Gastrocnemius medialis (tissue), 4 donors: ENCODE measurements at regions of chr2 and their contacts with region 1.

Region 1: DNA sequence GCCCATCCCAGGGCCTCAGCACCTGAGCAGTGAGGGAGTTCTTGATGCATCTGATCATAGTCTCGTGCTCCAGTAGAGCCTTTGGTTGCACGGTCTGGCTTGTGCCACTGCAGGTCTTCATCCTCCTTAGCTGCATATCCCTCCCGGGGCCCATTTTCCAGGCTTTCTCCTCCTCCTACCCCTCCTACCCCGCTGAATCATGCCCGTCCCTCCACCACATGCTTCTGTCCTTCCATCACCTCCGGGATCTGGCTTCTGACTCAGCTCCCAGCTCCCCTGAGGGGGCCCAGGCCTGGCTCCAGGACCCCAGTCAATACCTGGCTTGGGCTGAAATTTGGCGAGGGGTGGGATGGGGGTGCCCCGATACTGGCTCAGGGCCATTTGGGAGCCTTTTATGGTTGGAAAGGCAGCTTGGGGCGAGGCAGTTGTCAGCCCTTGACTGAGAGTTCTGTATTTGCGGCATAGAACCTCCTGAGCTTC is 18.2 kb downstream of the SPEG start:
- DNase-seq: peak in 1 of 2 donors; percentile 80
- ATAC-seq: peak; percentile 5 to 38
- H3K4me3 ChIP-seq: peak overlapping the region in 2 of 4 donors; percentile 14 to 15
- H3K27ac ChIP-seq: peak overlapping the region; percentile 95 to 99 (median 97)
- H3K4me1 ChIP-seq: peaks cover 59 to 62% of the 10 kb centered on the region in 2 donors
- H3K27me3 ChIP-seq: no peaks in the 10 kb centered on the region
- CTCF ChIP-seq: no peak
- POLR2A ChIP-seq: no peak

Region 2: GRCh38 chr2:219155054-219155644 is 297.7 kb before region 1 on chr2:
- in situ Hi-C with region 1: no loop called
- intact Hi-C with region 1: no loop called
- DNase-seq: no peak
- ATAC-seq: peak; percentile 41 to 66
- H3K4me3 ChIP-seq: no peak overlapping the region
- H3K27ac ChIP-seq: no peak overlapping the region
- H3K4me1 ChIP-seq: peaks cover 5 to 6% of the 10 kb centered on the region in 2 donors
- H3K27me3 ChIP-seq: no peaks in the 10 kb centered on the region
- CTCF ChIP-seq: peak; percentile 34 to 69 (median 60)
- POLR2A ChIP-seq: no peak

Region 3: DNA sequence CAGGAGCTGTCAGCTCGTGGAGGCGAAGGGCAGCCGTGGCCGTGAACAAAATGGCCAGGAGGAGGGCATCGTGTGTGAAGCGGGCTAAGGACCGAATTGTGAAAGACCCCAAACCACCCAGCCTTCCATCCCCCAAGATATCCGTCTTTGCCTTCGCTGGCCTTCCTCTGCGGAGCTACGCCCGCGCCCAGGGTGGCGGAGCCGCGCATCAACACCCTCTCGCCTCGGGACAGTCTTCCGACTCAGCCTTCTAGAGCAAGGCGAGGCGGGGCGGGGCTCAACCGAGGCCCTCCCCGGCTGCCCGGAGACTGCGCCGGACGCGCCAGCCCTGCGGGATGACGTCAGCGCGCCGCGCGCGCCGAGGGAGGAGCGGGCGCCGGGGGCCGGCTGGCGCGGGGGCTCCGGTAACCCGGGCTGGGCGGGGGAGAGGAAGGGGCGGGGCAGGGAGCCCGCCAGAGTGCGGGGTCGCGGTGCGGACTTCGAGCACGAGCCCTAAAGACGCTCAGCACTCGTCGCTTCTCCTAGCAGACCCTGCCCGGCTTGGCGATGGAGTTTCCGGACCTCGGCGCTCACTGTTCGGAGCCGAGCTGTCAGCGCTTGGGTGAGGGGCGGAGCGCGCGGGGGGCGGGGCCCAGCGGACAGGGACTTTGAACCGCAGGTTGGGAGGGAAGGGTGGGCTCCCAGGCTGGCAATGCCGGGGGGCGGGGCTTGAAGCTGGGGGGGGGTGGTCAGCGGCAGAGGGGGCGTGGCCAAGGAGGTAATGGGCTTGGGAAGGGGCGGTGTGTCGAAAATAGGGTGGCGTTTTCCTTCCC is 246.2 kb before region 1 on chr2 and contains the start of gene ZFAND2B:
- in situ Hi-C with region 1: no loop called
- intact Hi-C with region 1: no loop called
- DNase-seq: peak; percentile 90 to 92
- ATAC-seq: peak; percentile 93 to 95
- H3K4me3 ChIP-seq: peak within 1 kb of the TSS; percentile 71 to 94 (median 84)
- H3K27ac ChIP-seq: peak within 1 kb of the TSS; percentile 87 to 99 (median 98)
- H3K4me1 ChIP-seq: peaks cover 16 to 21% of the 10 kb centered on the region in 2 donors
- H3K27me3 ChIP-seq: no peaks in the 10 kb centered on the region
- CTCF ChIP-seq: peak in 4 of 5 experiments; percentile 14 to 43 (median 18)
- POLR2A ChIP-seq: peak; percentile 89 to 93
- total RNA-seq, gene ZFAND2B: 33.2 to 60.8 (median 41.2) TPM

Region 4: DNA sequence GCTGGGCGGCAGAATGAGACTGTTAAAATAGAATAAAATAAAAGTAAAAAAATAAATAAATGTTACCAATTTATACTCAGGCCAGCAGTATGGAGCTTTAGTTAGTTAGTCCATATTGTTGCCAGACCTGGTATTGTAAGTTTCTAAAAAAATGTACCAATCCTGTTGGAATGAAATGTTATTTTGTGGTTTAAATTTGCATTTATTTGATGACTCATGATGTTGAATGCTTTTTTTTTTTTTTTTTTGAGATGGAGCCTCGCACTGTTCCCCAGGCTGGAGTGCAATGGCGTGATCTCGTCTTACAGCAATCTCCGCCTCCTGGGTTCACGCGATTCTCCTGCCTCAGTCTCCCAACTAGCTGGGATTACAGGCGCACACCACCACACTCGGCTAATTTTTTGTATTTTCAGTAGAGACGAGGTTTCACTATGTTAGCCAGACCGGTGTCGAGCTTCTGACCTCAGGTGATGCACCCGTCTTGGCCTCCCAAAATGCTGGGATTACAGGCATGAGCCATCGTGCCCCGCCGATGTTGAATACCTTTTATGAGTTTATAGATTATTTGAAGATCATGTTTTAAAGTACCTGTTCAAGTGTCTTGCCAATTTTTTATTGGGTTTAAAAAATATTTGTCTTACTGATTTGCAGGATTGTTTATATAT is 137.9 kb before region 1 on chr2:
- in situ Hi-C with region 1: no loop called
- intact Hi-C with region 1: no loop called
- DNase-seq: no peak
- ATAC-seq: no peak
- H3K4me3 ChIP-seq: no peak overlapping the region
- H3K27ac ChIP-seq: no peak overlapping the region
- H3K4me1 ChIP-seq: no peaks in the 10 kb centered on the region
- H3K27me3 ChIP-seq: peaks cover 7 to 22% (median 9%) of the 10 kb centered on the region in 3 donors
- CTCF ChIP-seq: no peak
- POLR2A ChIP-seq: no peak

Region 5: DNA sequence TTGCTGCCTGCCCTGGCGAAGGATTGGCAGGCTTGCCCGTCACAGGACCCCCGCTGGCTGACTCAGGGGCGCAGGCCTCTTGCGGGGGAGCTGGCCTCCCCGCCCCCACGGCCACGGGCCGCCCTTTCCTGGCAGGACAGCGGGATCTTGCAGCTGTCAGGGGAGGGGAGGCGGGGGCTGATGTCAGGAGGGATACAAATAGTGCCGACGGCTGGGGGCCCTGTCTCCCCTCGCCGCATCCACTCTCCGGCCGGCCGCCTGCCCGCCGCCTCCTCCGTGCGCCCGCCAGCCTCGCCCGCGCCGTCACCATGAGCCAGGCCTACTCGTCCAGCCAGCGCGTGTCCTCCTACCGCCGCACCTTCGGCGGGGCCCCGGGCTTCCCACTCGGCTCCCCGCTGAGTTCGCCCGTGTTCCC is 34.7 kb before region 1 on chr2 and contains the start of gene DES:
- in situ Hi-C with region 1: no loop called
- intact Hi-C with region 1: loop called (anchors 1 kb)
- DNase-seq: peak; percentile 87 to 94
- ATAC-seq: peak; percentile 47 to 55
- H3K4me3 ChIP-seq: peak within 1 kb of the TSS; percentile 75 to 95 (median 83)
- H3K27ac ChIP-seq: peak within 1 kb of the TSS; percentile 95 to 100 (median 98)
- H3K4me1 ChIP-seq: peaks cover 52 to 62% of the 10 kb centered on the region in 2 donors
- H3K27me3 ChIP-seq: no peaks in the 10 kb centered on the region
- CTCF ChIP-seq: no peak
- POLR2A ChIP-seq: peak; percentile 94 to 98
- total RNA-seq, gene DES: 19,008 to 28,635 (median 23,575) TPM

Region 6: GRCh38 chr2:219439506-219440093 is 13.3 kb before region 1 on chr2:
- in situ Hi-C with region 1: no loop called
- intact Hi-C with region 1: loop called (anchors 2 kb)
- DNase-seq: peak in 1 of 2 donors; percentile 59
- ATAC-seq: peak in 1 of 2 donors; percentile 2
- H3K4me3 ChIP-seq: no peak overlapping the region
- H3K27ac ChIP-seq: peak overlapping the region; percentile 95 to 100 (median 98)
- H3K4me1 ChIP-seq: peaks cover 59 to 72% of the 10 kb centered on the region in 2 donors
- H3K27me3 ChIP-seq: no peaks in the 10 kb centered on the region
- CTCF ChIP-seq: no peak
- POLR2A ChIP-seq: no peak

Region 7: DNA sequence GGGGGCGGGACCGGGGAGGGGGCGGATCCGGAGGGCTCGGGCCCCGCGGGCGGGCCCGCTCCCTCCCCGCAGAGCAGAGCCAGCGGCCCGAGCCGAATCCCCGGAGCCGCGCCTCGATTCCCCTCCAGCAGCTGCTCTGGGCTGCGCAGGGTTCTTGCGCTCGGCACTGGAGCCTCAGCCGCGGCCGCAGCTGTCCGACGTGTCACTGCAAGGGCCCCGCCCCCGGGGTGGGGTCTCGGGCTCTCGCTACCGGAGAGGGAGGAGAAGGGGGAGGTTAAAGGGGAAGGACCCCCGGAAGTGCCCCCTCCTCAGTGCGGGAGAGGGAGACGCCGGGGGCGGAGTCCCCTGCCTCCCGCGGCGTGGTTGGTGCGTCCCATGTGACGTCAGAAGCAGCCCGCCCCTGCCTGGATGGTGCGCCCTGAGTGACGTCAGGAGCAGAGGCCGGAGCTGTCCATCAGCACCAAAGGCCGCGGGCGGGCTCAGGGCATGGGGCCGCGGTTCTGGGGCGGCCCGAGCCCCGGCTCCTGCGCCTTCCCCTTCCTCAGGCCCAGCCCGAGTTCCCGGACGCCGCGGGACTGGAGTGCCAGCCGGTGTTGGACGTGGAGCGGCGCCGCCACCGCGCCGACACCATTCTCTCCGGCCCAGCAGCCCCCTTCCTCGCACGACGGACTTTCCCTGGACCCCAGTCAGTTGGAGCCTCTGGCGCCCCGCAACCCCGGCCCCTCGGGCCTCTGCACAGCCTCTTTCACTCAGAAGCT is 90.9 kb after region 1 on chr2 and contains the starts of genes CHPF and TMEM198:
- in situ Hi-C with region 1: no loop called
- intact Hi-C with region 1: no loop called
- DNase-seq: peak; percentile 96 to 98
- ATAC-seq: peak; percentile 87 to 90
- H3K4me3 ChIP-seq: peak within 1 kb of the TSS; percentile 63 to 79 (median 74)
- H3K27ac ChIP-seq: peak within 1 kb of the TSS; percentile 75 to 96 (median 88)
- H3K4me1 ChIP-seq: peaks cover 18 to 23% of the 10 kb centered on the region in 2 donors
- H3K27me3 ChIP-seq: no peaks in the 10 kb centered on the region
- CTCF ChIP-seq: no peak
- POLR2A ChIP-seq: peak; percentile 71 to 89
- total RNA-seq, gene CHPF: 21.0 to 50.5 (median 37.2) TPM
- total RNA-seq, gene TMEM198: 0.87 to 6.7 (median 3.3) TPM